ENCODE measurements at regions of chr3 and their contacts with region 1.

Region 1: GRCh38 chr3:58404396-58404795 is 29.2 kb downstream of the PDHB start:
- DNase-seq: no peak
- H3K4me3 ChIP-seq: no peak overlapping the region
- H3K27me3 ChIP-seq: no peaks in the 10 kb centered on the region
- CTCF ChIP-seq: no peak

Region 2: GRCh38 chr3:58377168-58377567 is 27.2 kb before region 1 on chr3:
- CTCF ChIA-PET with region 1: no interaction called
- POLR2A ChIA-PET with region 1: interaction called, 13 read pairs
- DNase-seq: no peak
- H3K4me3 ChIP-seq: no peak overlapping the region
- H3K27me3 ChIP-seq: no peaks in the 10 kb centered on the region
- CTCF ChIP-seq: no peak